Naive thymus-derived CD4-positive, alpha-beta T cell (primary cell): ENCODE measurements at regions of chr17 and their contacts with region 1.

Region 1: DNA sequence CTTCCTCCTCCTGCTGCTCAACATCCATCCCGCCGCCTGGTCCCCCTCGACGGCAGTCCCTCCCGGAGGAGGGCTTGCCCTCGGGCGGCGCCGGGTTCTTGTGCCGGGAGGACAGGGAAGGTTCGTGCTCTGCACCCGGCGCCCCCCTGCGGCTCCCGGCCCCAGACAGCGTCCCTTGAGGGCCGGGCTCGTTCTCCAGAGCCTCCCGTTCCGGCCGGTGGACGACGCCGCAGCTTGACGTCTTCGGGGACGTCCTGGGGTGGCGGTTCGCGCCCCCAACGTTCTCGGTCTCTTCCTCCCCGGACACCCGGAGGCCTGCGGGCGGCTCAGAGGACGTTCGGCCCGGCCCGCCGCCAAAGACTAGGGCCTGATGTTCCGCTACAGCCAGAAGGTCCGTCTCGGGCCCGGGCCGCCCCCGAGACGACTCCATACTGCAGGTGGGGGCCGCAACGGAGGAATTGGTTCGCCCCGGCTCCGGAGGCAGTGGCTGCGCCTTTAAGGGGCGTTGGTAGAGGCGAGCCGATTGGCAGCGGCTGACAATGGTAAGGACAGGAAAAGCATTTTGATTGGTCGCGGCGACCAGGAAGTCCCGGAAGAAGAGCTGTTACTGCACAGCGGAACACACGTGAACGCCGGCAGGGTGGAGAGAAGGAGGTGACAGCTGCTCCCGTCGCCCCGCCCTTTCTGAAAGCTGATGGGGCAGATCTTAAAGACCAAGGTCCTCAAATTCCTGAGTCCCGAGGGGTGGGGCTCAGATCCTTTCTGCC is at the start of gene BORCS6:
- DNase-seq: peak; percentile 76 to 97 (median 94)
- ATAC-seq: peak; percentile 81
- H3K4me3 ChIP-seq: peak within 1 kb of the TSS; percentile 91
- H3K4me3 Mint-ChIP-seq: peak within 1 kb of the TSS in 2 of 10 donors; percentile 15 to 49
- H3K27ac ChIP-seq: peak within 1 kb of the TSS; percentile 87
- H3K27ac Mint-ChIP-seq: peak within 1 kb of the TSS in 7 of 9 donors; percentile 46 to 94 (median 88)
- H3K4me1 ChIP-seq: peaks cover 33 to 38% of the 10 kb centered on the region in 2 donors
- H3K4me1 Mint-ChIP-seq: peaks cover 8 to 13% (median 13%) of the 10 kb centered on the region in 7 donors
- H3K27me3 ChIP-seq: no peaks in the 10 kb centered on the region
- H3K27me3 Mint-ChIP-seq: no peaks in the 10 kb centered on the region
- total RNA-seq, gene BORCS6: 5.4 to 16.1 (median 13.4) TPM

Region 2: GRCh38 chr17:8138672-8139371 is 51.1 kb before region 1 on chr17:
- CTCF ChIA-PET with region 1: interaction called, 14 read pairs
- POLR2A ChIA-PET with region 1: interaction called, 34 read pairs
- intact Hi-C with region 1: loop called (anchors 1 kb)
- DNase-seq: peak; percentile 93 to 99 (median 98)
- ATAC-seq: peak; percentile 90
- H3K4me3 ChIP-seq: peak overlapping the region; percentile 76
- H3K4me3 Mint-ChIP-seq: no peak overlapping the region
- H3K27ac ChIP-seq: peak overlapping the region; percentile 84
- H3K27ac Mint-ChIP-seq: no peak overlapping the region
- H3K4me1 ChIP-seq: peaks cover 8 to 17% of the 10 kb centered on the region in 2 donors
- H3K4me1 Mint-ChIP-seq: peaks cover 0 to 5% (median 0%) of the 10 kb centered on the region in 7 donors
- H3K27me3 ChIP-seq: no peaks in the 10 kb centered on the region
- H3K27me3 Mint-ChIP-seq: peaks cover 0 to 11% (median 0%) of the 10 kb centered on the region in 5 donors

Region 3: GRCh38 chr17:8173056-8173870 is 16.6 kb before region 1 on chr17:
- CTCF ChIA-PET with region 1: interaction called, 4 read pairs
- POLR2A ChIA-PET with region 1: interaction called, 118 read pairs
- intact Hi-C with region 1: loop called (anchors 1 kb)
- DNase-seq: peak; percentile 49 to 95 (median 91)
- ATAC-seq: peak; percentile 91
- H3K4me3 ChIP-seq: peak overlapping the region; percentile 57
- H3K4me3 Mint-ChIP-seq: peak overlapping the region; percentile 80 to 96 (median 90)
- H3K27ac ChIP-seq: peak overlapping the region; percentile 92
- H3K27ac Mint-ChIP-seq: peak overlapping the region; percentile 99 to 100 (median 100)
- H3K4me1 ChIP-seq: peaks cover 26 to 39% of the 10 kb centered on the region in 2 donors
- H3K4me1 Mint-ChIP-seq: peaks cover 33 to 60% (median 52%) of the 10 kb centered on the region in 7 donors
- H3K27me3 ChIP-seq: no peaks in the 10 kb centered on the region
- H3K27me3 Mint-ChIP-seq: no peaks in the 10 kb centered on the region

Region 4: GRCh38 chr17:8209909-8210760 is 20.2 kb after region 1 on chr17 and contains the start of gene AURKB:
- CTCF ChIA-PET with region 1: interaction called, 4 read pairs
- POLR2A ChIA-PET with region 1: interaction called, 91 read pairs
- intact Hi-C with region 1: loop called (anchors 1 kb)
- DNase-seq: peak; percentile 76 to 96 (median 90)
- ATAC-seq: peak; percentile 99
- H3K4me3 ChIP-seq: peak within 1 kb of the TSS; percentile 91
- H3K4me3 Mint-ChIP-seq: peak within 1 kb of the TSS; percentile 85 to 97 (median 93)
- H3K27ac ChIP-seq: peak within 1 kb of the TSS; percentile 81
- H3K27ac Mint-ChIP-seq: peak within 1 kb of the TSS; percentile 60 to 95 (median 86)
- H3K4me1 ChIP-seq: peaks cover 5 to 8% of the 10 kb centered on the region in 2 donors
- H3K4me1 Mint-ChIP-seq: peaks cover 14 to 35% (median 16%) of the 10 kb centered on the region in 7 donors
- H3K27me3 ChIP-seq: no peaks in the 10 kb centered on the region
- H3K27me3 Mint-ChIP-seq: no peaks in the 10 kb centered on the region
- total RNA-seq, gene AURKB: 1.1 to 97.7 (median 1.3) TPM

Region 5: DNA sequence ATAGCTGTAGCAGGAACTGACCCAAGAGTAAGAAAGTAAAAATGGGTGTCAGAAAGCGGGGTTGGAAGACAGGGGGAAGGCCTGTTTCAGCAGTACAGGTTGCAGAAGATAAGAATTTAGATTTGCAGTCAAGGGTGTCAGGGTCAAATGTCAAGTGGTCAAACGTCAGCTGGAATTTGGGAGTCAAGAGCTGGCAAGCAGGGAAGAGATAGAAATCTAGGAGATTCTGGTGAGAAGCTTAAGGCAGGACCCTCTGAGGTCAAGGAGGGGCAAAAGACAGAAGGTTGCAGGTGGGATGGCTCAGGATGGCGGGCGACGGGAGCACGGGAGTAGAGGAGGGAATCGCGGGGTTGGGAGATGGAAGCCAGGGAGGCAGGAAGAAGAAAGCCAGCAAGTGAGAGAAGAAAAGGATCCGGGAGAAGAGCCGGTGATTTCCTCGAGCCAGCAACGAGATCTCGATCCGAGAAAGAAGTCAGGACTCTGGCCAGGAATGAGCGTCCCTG is 105.0 kb after region 1 on chr17:
- CTCF ChIA-PET with region 1: interaction called, 6 read pairs
- POLR2A ChIA-PET with region 1: interaction called, 19 read pairs
- intact Hi-C with region 1: loop called (anchors 1 kb)
- DNase-seq: no peak
- ATAC-seq: no peak
- H3K4me3 ChIP-seq: peak overlapping the region; percentile 96
- H3K4me3 Mint-ChIP-seq: peak overlapping the region; percentile 87 to 97 (median 90)
- H3K27ac ChIP-seq: peak overlapping the region; percentile 86
- H3K27ac Mint-ChIP-seq: peak overlapping the region; percentile 81 to 98 (median 93)
- H3K4me1 ChIP-seq: peaks cover 4 to 13% of the 10 kb centered on the region in 2 donors
- H3K4me1 Mint-ChIP-seq: peaks cover 23 to 45% (median 38%) of the 10 kb centered on the region in 7 donors
- H3K27me3 ChIP-seq: no peaks in the 10 kb centered on the region
- H3K27me3 Mint-ChIP-seq: no peaks in the 10 kb centered on the region

Region 6: DNA sequence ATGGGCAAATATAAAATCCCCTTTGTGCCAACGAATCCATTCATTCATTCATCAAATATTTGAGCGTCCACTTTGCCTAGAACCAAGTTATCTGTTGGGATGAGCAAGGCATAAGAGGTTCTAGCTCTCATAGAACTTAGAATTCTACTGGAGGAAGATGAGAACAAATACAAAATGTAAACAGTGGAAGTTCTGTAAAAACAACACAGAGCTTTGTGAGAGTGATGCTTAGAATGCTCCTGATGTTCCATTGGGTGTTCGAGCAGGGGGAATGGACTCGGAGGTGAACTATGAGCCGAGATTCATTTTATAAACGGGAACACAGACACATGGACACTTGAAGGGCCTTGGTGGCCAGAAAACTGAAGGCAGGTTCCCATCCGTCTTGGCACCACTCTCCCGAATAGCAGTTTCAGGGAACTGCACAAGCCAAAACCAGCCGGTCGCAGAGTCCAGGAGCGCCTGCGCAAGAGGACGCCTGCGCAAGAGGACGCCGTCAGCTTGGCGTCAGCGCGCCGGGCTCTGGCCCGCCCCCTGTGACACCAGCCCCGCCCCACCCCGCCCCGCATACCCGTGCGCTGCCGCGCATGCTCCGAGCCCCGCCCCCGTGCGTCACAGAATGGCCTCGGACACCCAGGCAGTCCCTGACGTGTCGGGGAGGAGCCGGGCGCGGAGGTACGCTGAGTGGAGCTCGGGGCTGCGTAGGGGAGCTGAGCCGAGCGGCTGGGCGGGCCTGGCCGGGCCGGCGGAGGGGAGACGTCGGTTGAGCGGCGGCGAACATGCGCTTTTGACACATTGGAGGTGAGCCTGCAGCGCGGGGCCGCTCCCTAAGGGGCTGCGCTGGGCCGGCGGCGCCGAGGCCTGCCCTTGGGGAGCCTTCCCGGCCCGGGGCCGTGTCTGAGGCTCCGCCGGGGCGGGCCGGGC is 245.6 kb after region 1 on chr17 and contains the start of gene NDEL1:
- CTCF ChIA-PET with region 1: no interaction called
- POLR2A ChIA-PET with region 1: no interaction called
- intact Hi-C with region 1: loop called in 1 of 2 experiments (anchors 1 kb)
- DNase-seq: peak; percentile 97 to 99 (median 99)
- ATAC-seq: peak; percentile 95
- H3K4me3 ChIP-seq: peak within 1 kb of the TSS; percentile 81
- H3K4me3 Mint-ChIP-seq: peak within 1 kb of the TSS; percentile 94 to 99 (median 96)
- H3K27ac ChIP-seq: peak within 1 kb of the TSS; percentile 100
- H3K27ac Mint-ChIP-seq: peak within 1 kb of the TSS; percentile 96 to 100 (median 98)
- H3K4me1 ChIP-seq: peaks cover 10 to 22% of the 10 kb centered on the region in 2 donors
- H3K4me1 Mint-ChIP-seq: peaks cover 9 to 46% (median 37%) of the 10 kb centered on the region in 7 donors
- H3K27me3 ChIP-seq: no peaks in the 10 kb centered on the region
- H3K27me3 Mint-ChIP-seq: no peaks in the 10 kb centered on the region
- total RNA-seq, gene NDEL1: 72.6 to 274 (median 116) TPM